ENCODE measurements at regions of chr2 and their contacts with region 1.

Region 1: GRCh38 chr2:173965329-173966025 is at the start of gene SP3:
- DNase-seq: peak; percentile 99
- total RNA-seq, gene SP3: 45.4 TPM

Region 2: DNA sequence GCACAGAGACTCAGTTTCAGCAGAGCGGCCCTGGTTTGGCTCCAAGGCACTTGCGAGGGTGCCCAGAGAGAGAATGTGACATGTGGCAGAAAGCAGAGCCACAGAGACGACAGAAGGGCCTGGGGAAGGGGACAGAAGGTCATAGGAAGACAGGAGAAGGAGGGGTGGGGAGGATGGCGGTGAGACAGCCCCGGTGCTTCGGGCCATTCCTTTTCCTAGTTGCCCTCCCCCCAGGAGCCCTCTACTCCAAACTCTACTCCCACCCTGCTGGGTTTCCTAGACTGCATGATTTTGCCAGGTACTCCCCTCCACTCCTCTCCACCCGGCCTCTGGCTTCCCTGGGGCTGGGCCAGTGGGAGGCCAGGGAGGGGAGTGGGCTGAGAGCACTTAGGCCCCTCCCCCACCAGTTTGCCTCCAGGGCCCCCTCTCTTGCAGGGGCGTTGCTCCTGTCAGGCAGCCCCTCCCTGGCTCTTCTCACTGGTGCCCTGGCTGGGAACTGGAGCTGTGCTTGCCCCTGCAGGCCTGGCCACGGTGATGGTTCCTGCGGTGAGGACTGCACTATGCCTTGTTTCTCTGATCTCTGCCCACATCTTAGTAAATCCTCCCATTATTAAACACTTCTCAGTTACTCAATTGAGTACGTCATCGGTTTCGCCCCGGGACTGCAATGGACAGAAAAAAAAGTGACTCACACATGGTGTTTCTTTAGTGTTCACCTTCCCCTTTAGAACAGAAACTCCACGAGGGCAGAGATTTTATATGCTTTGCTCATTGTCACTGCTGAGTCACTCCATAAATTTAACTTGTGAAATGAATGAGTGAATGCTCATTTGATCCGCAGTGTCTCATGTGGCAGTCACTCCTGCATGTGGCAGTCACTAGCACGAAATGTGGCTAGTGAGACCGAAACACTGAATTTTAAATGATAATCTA is 58.4 kb after region 1 on chr2:
- intact Hi-C with region 1: loop called (anchors 2 kb)
- DNase-seq: no peak

Measured in cardiac septum (tissue), 1 donor.